IMR-90 (cell line): ENCODE measurements at regions of chr5 and their contacts with region 1.

Region 1: DNA sequence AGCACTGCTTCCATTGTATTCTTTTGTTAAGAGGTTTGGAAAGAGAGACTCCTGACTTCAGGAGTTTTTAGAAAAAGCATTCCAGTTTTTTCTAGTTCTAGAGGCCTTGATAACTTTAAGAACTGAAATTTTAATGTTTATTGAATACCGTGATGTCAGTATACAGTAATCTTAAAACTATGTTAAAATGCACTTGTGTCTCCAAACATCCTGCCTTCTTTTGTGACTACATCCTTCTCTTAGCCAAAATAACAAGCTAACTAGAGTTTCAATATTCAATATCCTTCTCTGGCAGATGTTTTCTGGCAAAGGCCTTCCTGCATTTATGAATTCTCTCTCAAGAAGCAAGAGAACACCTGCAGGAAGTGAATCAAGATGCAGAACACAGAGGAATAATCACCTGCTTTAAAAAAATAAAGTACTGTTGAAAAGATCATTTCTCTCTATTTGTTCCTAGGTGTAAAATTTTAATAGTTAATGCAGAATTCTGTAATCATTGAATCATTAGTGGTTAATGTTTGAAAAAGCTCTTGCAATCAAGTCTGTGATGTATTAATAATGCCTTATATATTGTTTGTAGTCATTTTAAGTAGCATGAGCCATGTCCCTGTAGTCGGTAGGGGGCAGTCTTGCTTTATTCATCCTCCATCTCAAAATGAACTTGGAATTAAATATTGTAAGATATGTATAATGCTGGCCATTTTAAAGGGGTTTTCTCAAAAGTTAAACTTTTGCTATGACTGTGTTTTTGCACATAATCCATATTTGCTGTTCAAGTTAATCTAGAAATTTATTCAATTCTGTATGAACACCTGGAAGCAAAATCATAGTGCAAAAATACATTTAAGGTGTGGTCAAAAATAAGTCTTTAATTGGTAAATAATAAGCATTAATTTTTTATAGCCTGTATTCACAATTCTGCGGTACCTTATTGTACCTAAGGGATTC is 43.1 kb downstream of the NDFIP1 start:
- DNase-seq: peak; percentile 89
- ATAC-seq: peak; percentile 93
- H3K4me3 ChIP-seq: no peak overlapping the region
- H3K27ac ChIP-seq: peak overlapping the region; percentile 79
- H3K4me1 ChIP-seq: peaks cover 5% of the 10 kb centered on the region
- H3K27me3 ChIP-seq: no peaks in the 10 kb centered on the region
- CTCF ChIP-seq: peak; percentile 97
- POLR2A ChIP-seq: no peak
- RAD21 ChIP-seq: peak; percentile 95

Region 2: GRCh38 chr5:142324871-142325724 is 173.4 kb after region 1 on chr5 and contains the start of gene SPRY4:
- CTCF ChIA-PET with region 1: interaction called, 7 read pairs
- POLR2A ChIA-PET with region 1: no interaction called
- dilution Hi-C with region 1: no loop called
- in situ Hi-C with region 1: no loop called
- intact Hi-C with region 1: loop called (anchors 1 kb)
- DNase-seq: peak; percentile 98
- ATAC-seq: peak; percentile 40
- H3K4me3 ChIP-seq: peak within 1 kb of the TSS; percentile 68
- H3K27ac ChIP-seq: peak within 1 kb of the TSS; percentile 100
- H3K4me1 ChIP-seq: peaks cover 31% of the 10 kb centered on the region
- H3K27me3 ChIP-seq: no peaks in the 10 kb centered on the region
- CTCF ChIP-seq: no peak; the same call in 1 of the 2 replicates
- POLR2A ChIP-seq: peak; percentile 98
- RAD21 ChIP-seq: peak; percentile 30; the same call in 1 of the 2 replicates
- total RNA-seq, gene SPRY4: 8.4 and 10.3 TPM in 2 replicates

Region 3: DNA sequence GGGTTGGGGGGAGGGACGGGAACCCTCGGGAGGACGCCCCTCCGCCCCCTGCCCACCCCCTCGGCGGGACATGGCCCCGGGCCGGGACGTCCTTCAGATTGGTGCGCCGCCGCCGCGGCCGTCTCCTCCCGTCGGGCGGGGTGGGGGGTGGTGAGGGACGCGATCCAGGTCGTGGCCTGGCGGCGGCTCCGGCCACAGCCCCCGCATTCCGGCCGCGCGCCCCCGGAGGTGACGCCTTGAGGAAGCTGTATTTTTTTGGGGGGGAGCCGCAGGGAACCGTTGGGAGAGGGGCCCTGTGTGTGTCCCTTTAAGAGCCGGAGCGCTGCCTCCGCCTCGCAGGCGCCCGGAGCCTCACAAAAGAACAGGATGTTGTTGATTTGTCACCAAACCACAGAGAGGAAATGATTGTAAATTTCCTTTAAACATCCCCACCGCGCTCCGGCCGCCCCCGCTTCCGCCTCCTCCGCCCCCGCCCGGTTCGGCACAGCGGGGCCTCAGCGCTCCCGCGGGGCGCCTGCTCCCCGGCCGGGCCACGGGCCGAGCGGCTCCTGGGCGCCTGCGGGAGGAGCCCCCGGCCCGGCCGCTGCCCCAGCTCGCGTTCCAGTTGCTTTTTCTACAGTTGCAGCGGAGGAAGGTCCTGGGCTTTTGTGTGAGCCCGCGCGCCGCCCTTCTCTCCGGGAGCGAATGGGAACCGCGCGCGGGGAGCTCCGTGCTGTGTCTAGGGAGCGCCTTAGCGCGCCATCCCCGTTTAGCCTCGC is 205.2 kb after region 1 on chr5:
- CTCF ChIA-PET with region 1: interaction called, 3 read pairs
- POLR2A ChIA-PET with region 1: no interaction called
- dilution Hi-C with region 1: no loop called
- in situ Hi-C with region 1: no loop called
- intact Hi-C with region 1: loop called (anchors 1 kb)
- DNase-seq: peak; percentile 92
- ATAC-seq: peak; percentile 87
- H3K4me3 ChIP-seq: peak overlapping the region; percentile 46
- H3K27ac ChIP-seq: peak overlapping the region; percentile 95
- H3K4me1 ChIP-seq: peaks cover 12% of the 10 kb centered on the region
- H3K27me3 ChIP-seq: no peaks in the 10 kb centered on the region
- CTCF ChIP-seq: 0 out of 2 replicates have a peak, but pooled peaks have one; percentile 9
- POLR2A ChIP-seq: peak; percentile 83
- RAD21 ChIP-seq: no peak; the same call in 1 of the 2 replicates

Region 4: GRCh38 chr5:142432369-142432863 is 280.7 kb after region 1 on chr5:
- CTCF ChIA-PET with region 1: no interaction called
- POLR2A ChIA-PET with region 1: no interaction called
- dilution Hi-C with region 1: no loop called
- in situ Hi-C with region 1: no loop called
- intact Hi-C with region 1: loop called (anchors 10 kb)
- DNase-seq: no peak
- ATAC-seq: no peak
- H3K4me3 ChIP-seq: no peak overlapping the region
- H3K27ac ChIP-seq: no peak overlapping the region
- H3K4me1 ChIP-seq: peaks cover 11% of the 10 kb centered on the region
- H3K27me3 ChIP-seq: no peaks in the 10 kb centered on the region
- CTCF ChIP-seq: no peak
- POLR2A ChIP-seq: no peak
- RAD21 ChIP-seq: no peak

Region 5: GRCh38 chr5:142611154-142611553 is 459.4 kb after region 1 on chr5:
- CTCF ChIA-PET with region 1: no interaction called
- POLR2A ChIA-PET with region 1: no interaction called
- dilution Hi-C with region 1: no loop called
- in situ Hi-C with region 1: no loop called
- intact Hi-C with region 1: loop called (anchors 5 kb)
- DNase-seq: peak; percentile 74
- ATAC-seq: peak; percentile 86
- H3K4me3 ChIP-seq: no peak overlapping the region
- H3K27ac ChIP-seq: no peak overlapping the region
- H3K4me1 ChIP-seq: peaks cover 16% of the 10 kb centered on the region
- H3K27me3 ChIP-seq: no peaks in the 10 kb centered on the region
- CTCF ChIP-seq: peak; percentile 96
- POLR2A ChIP-seq: peak; percentile 36; the same call in 1 of the 2 replicates
- RAD21 ChIP-seq: peak; percentile 96

Region 6: GRCh38 chr5:142655339-142656267 is 503.9 kb after region 1 on chr5:
- CTCF ChIA-PET with region 1: no interaction called
- POLR2A ChIA-PET with region 1: no interaction called
- dilution Hi-C with region 1: no loop called
- in situ Hi-C with region 1: no loop called
- intact Hi-C with region 1: loop called (anchors 1 kb)
- DNase-seq: peak; percentile 74
- ATAC-seq: peak; percentile 100
- H3K4me3 ChIP-seq: no peak overlapping the region
- H3K27ac ChIP-seq: no peak overlapping the region
- H3K4me1 ChIP-seq: peaks cover 2% of the 10 kb centered on the region; the same call in 1 of the 2 replicates
- H3K27me3 ChIP-seq: no peaks in the 10 kb centered on the region
- CTCF ChIP-seq: peak; percentile 99
- POLR2A ChIP-seq: peak; percentile 58; the same call in 1 of the 2 replicates
- RAD21 ChIP-seq: peak; percentile 100

Region 7: DNA sequence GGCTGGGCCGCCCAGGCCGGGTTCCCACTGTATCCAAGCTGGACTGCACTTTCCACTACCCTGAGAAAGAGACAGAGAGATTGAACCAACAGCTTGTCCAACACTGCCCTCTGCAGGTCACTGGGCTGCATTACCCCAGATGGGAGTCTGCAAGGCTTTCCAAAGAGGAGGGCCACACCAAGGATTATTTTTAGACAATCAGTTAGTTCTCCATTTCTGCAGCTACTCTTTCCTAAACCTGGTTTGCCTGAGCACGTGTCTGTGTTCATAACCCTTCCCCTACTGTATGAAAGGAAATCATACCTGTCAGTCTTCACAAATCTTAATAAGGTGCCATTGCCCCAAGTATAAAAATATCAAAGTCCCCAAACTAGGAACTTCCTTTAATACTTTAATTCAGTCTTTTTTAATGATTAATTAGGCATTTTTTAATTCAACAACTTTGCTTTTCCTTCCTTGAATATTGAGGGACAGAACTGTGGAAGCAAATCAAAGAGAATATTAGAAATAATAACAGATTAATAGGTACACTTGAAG is 547.5 kb after region 1 on chr5:
- CTCF ChIA-PET with region 1: no interaction called
- POLR2A ChIA-PET with region 1: no interaction called
- dilution Hi-C with region 1: no loop called
- in situ Hi-C with region 1: loop called (anchors 10 kb)
- intact Hi-C with region 1: loop called (anchors 1 kb)
- DNase-seq: peak; percentile 84
- ATAC-seq: peak; percentile 98
- H3K4me3 ChIP-seq: no peak overlapping the region
- H3K27ac ChIP-seq: no peak overlapping the region
- H3K4me1 ChIP-seq: peaks cover 10% of the 10 kb centered on the region
- H3K27me3 ChIP-seq: no peaks in the 10 kb centered on the region
- CTCF ChIP-seq: peak; percentile 99
- POLR2A ChIP-seq: peak; percentile 69
- RAD21 ChIP-seq: peak; percentile 100